ENCODE measurements at regions of chr5 and their contacts with region 1.

Region 1: DNA sequence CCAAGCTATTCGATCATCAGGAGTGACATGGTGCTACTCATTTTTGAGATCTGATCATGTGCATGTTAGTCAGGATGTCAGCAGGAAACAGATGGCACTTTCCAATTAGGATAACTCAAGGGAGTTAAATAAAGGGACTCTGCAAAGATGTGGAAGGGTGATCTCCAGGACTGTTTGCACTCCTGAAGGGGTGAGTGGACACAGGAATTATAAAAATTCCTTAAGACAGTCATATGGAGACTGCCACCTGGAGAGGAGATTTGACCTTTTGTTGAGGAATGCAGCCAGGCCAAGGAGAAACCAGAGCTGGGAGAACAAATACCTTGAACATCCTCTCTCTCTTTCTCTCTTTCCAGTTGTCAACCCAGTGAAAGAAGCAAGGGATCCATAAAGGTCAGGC is 189.1 kb downstream of the GABRG2 start:
- DNase-seq: peak; percentile 44 to 60
- H3K4me3 ChIP-seq: no peak overlapping the region
- H3K4me3 Mint-ChIP-seq: peak overlapping the region; percentile 15
- H3K27ac Mint-ChIP-seq: peak overlapping the region; percentile 85
- H3K4me1 ChIP-seq: peaks cover 16% of the 10 kb centered on the region
- H3K4me1 Mint-ChIP-seq: peaks cover 26% of the 10 kb centered on the region
- H3K27me3 ChIP-seq: no peaks in the 10 kb centered on the region
- H3K27me3 Mint-ChIP-seq: no peaks in the 10 kb centered on the region
- CTCF ChIP-seq: no peak

Region 2: GRCh38 chr5:161857316-161857715 is 399.4 kb before region 1 on chr5:
- CTCF ChIA-PET with region 1: no interaction called
- POLR2A ChIA-PET with region 1: no interaction called
- intact Hi-C with region 1: no loop called
- DNase-seq: no peak
- H3K4me3 ChIP-seq: no peak overlapping the region
- H3K4me3 Mint-ChIP-seq: no peak overlapping the region
- H3K27ac Mint-ChIP-seq: no peak overlapping the region
- H3K4me1 ChIP-seq: peaks cover 8% of the 10 kb centered on the region; the same call in 1 of the 2 replicates
- H3K4me1 Mint-ChIP-seq: peaks cover 7% of the 10 kb centered on the region
- H3K27me3 ChIP-seq: no peaks in the 10 kb centered on the region
- H3K27me3 Mint-ChIP-seq: no peaks in the 10 kb centered on the region
- CTCF ChIP-seq: no peak

Region 3: DNA sequence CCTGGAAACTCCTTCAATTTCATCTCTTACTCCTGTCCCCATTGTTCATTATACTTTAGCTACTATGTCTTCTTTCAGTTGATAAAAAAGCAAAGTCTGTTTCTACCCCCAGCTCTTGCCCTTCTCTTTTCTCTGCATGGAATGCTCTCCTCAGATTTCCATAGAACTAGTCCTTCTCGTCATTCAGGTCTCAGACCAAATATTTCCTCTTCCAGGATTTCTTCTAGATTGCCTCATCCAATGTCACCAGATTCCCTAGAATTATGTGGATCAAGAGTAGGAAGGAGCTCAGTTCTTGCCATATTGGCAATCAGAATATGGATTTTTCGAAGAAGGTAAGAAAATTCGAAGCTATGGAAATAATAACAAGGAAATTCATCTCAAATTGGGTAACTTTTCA is 13.1 kb before region 1 on chr5:
- CTCF ChIA-PET with region 1: no interaction called
- POLR2A ChIA-PET with region 1: no interaction called
- intact Hi-C with region 1: loop called (anchors 2 kb)
- DNase-seq: peak in 1 of 2 experiments; percentile 16
- H3K4me3 ChIP-seq: no peak overlapping the region
- H3K4me3 Mint-ChIP-seq: peak overlapping the region; percentile 30
- H3K27ac Mint-ChIP-seq: peak overlapping the region; percentile 10
- H3K4me1 ChIP-seq: peaks cover 4% of the 10 kb centered on the region; the same call in 1 of the 2 replicates
- H3K4me1 Mint-ChIP-seq: peaks cover 10% of the 10 kb centered on the region
- H3K27me3 ChIP-seq: no peaks in the 10 kb centered on the region
- H3K27me3 Mint-ChIP-seq: peaks cover 4% of the 10 kb centered on the region
- CTCF ChIP-seq: no peak

Region 4: GRCh38 chr5:162274679-162275078 is 18.0 kb after region 1 on chr5:
- CTCF ChIA-PET with region 1: no interaction called
- POLR2A ChIA-PET with region 1: no interaction called
- intact Hi-C with region 1: no loop called
- DNase-seq: no peak
- H3K4me3 ChIP-seq: no peak overlapping the region
- H3K4me3 Mint-ChIP-seq: no peak overlapping the region
- H3K27ac Mint-ChIP-seq: no peak overlapping the region
- H3K4me1 ChIP-seq: no peaks in the 10 kb centered on the region
- H3K4me1 Mint-ChIP-seq: no peaks in the 10 kb centered on the region
- H3K27me3 ChIP-seq: no peaks in the 10 kb centered on the region
- H3K27me3 Mint-ChIP-seq: peaks cover 2% of the 10 kb centered on the region
- CTCF ChIP-seq: no peak